ENCODE measurements at regions of chr4 and their contacts with region 1.

Region 1: DNA sequence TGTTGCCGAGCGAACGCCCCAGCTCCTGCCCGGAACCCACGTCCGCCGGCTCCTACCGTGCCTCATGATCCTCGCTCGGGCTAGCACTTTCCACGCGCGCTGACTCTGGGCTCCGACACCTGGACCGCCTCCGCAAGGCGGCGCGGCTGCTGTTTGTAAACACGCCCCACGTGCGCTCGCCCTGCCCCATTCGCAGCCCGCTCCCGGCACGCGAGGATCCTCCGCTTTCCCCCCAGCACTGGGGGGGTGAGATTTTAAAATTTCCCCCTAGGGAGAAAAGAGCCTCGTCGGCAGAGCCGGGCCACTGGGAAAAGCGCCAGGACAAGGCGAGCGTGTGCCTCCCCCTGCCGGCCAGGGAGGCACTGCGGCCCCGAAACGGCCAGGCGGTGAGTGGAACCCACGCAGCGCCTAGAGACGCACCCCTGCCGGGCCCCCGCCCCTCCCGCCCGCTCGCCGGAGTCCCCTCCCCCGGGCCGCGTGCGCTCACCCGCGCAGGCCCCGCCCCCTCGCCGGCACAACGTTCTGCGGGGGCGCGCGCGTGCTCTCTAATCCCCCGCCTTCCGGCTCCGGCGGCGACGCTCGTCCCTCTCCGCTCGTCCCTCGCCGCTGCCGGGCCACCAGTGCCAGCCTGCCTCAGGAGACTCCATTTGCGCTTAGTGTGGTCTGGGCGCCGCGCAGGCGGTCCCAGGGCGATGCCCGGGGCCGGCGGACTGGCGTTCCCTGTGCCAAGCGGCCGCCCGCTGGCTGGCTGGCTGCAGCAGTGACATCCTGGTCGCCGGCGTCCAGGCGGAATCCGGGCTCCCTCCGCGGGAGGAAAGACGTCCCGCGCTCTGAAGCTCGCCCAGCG is at the start of gene TIGD2:
- DNase-seq: peak; percentile 85
- H3K4me3 ChIP-seq: peak within 1 kb of the TSS; percentile 74 to 75
- H3K27ac ChIP-seq: peak within 1 kb of the TSS; percentile 84 to 87
- H3K4me1 ChIP-seq: no peaks in the 10 kb centered on the region
- H3K27me3 ChIP-seq: no peaks in the 10 kb centered on the region
- CTCF ChIP-seq: peak; percentile 67 to 90 (median 77)
- POLR2A ChIP-seq: peak; percentile 77
- total RNA-seq, gene TIGD2: 8.6 to 8.7 TPM

Region 2: GRCh38 chr4:88720451-88721428 is 390.5 kb before region 1 on chr4:
- intact Hi-C with region 1: no loop called
- DNase-seq: no peak
- H3K4me3 ChIP-seq: no peak overlapping the region
- H3K27ac ChIP-seq: no peak overlapping the region
- H3K4me1 ChIP-seq: no peaks in the 10 kb centered on the region
- H3K27me3 ChIP-seq: no peaks in the 10 kb centered on the region
- CTCF ChIP-seq: no peak
- POLR2A ChIP-seq: no peak

Region 3: GRCh38 chr4:89056953-89057398 is 54.2 kb before region 1 on chr4 and contains the start of gene FAM13A:
- intact Hi-C with region 1: loop called (anchors 2 kb)
- DNase-seq: peak; percentile 95
- H3K4me3 ChIP-seq: peak within 1 kb of the TSS; percentile 24 to 44
- H3K27ac ChIP-seq: peak within 1 kb of the TSS; percentile 63 to 70
- H3K4me1 ChIP-seq: no peaks in the 10 kb centered on the region
- H3K27me3 ChIP-seq: no peaks in the 10 kb centered on the region
- CTCF ChIP-seq: no peak
- POLR2A ChIP-seq: no peak
- total RNA-seq, gene FAM13A: 27.2 to 107 TPM

Measured in prostate gland (tissue), 2 donors.